Endothelial cell of umbilical vein (primary cell): ENCODE measurements at regions of chr20 and their contacts with region 1.

Region 1: DNA sequence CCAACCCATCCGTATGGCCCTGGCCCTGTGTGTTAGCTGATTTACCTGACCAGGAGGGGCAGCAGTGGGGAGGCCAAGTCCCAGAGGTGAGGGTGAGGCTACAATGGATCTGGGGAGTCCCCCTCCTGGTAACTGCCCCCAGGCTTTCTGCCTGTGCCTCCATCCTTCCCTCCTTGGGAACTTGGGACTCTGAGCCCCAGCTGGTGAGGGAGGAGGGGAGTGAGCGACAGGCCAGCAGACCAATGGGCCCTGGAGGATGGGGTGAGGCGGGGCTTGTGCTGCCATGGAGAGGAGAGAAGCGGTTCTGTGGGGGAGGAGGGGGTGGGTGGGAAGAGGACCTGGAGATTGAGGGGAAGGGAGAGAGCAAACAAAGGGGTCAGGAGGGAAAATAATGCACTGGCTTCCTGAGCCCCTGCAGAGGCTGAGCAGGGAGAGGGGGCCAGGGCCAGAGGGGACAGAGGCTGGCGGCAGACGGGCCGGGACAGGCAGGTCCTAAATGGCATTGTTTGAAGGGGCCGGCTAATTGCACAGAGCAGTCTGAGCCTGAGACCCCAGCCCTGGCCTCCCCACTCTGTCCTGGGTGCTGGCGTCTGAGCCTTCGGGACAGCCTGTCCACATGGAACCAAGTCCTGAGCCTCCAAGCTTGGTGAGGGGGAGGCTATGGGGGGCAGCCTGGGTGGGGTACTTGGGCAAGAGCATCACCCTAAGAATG is 17.5 kb downstream of the DNMT3B start:
- DNase-seq: no peak
- H3K4me3 ChIP-seq: no peak overlapping the region
- H3K27ac ChIP-seq: no peak overlapping the region
- H3K4me1 ChIP-seq: no peaks in the 10 kb centered on the region
- H3K27me3 ChIP-seq: no peaks in the 10 kb centered on the region
- CTCF ChIP-seq: no peak
- POLR2A ChIP-seq: no peak

Region 2: GRCh38 chr20:32652739-32653526 is 126.7 kb before region 1 on chr20:
- CTCF ChIA-PET with region 1: interaction called, 14 read pairs
- POLR2A ChIA-PET with region 1: no interaction called
- dilution Hi-C with region 1: no loop called
- intact Hi-C with region 1: no loop called
- DNase-seq: peak; percentile 70
- H3K4me3 ChIP-seq: no peak overlapping the region
- H3K27ac ChIP-seq: no peak overlapping the region
- H3K4me1 ChIP-seq: no peaks in the 10 kb centered on the region
- H3K27me3 ChIP-seq: no peaks in the 10 kb centered on the region
- CTCF ChIP-seq: peak; percentile 93 to 95
- POLR2A ChIP-seq: no peak

Region 3: DNA sequence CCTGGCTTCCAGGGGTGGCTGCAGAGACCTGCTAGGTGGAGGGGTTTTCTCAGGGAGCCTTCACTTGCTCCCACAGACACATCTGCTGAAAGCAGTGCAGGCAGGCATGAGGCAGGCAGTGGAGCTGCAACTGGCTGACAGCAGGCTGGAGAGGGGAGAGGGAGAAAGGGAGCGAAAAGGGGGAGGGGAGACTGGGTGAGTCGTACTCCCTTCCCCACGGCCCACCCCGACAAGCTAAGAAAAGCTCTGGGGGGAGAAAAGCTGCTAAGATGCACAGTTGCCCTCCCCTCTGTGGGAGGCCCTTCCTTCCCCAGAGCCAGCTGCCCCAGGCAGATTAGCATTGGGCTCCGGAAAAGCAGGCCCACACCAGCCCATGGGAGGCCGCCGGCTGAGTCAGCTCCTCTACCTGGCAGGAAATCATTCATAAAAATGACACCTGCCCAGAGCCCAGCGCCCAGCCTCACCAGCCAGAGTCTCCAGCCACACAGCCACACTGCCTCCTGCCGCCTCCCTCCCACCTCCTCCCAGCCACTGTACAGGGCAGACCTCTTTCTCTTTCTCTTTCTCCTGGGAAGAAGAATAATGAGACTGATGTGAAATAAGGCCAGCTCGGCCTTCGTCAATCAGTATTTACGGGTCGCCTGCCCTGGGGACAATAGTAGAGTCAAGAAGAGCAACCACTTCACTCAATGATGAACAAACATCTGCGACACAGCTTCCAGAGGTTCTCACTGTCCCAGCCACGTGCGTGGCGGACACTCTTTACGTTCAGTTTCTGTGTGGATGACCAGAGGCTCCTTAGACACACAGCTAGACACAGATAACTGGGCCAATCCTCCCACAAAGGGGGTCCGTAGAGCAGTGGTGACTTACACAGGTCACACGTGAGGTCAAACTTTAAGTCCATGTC is 98.2 kb before region 1 on chr20:
- CTCF ChIA-PET with region 1: interaction called, 636 read pairs
- POLR2A ChIA-PET with region 1: no interaction called
- dilution Hi-C with region 1: no loop called
- intact Hi-C with region 1: no loop called
- DNase-seq: peak; percentile 76
- H3K4me3 ChIP-seq: no peak overlapping the region
- H3K27ac ChIP-seq: no peak overlapping the region
- H3K4me1 ChIP-seq: peaks cover 11% of the 10 kb centered on the region
- H3K27me3 ChIP-seq: no peaks in the 10 kb centered on the region
- CTCF ChIP-seq: no peak
- POLR2A ChIP-seq: no peak

Region 4: DNA sequence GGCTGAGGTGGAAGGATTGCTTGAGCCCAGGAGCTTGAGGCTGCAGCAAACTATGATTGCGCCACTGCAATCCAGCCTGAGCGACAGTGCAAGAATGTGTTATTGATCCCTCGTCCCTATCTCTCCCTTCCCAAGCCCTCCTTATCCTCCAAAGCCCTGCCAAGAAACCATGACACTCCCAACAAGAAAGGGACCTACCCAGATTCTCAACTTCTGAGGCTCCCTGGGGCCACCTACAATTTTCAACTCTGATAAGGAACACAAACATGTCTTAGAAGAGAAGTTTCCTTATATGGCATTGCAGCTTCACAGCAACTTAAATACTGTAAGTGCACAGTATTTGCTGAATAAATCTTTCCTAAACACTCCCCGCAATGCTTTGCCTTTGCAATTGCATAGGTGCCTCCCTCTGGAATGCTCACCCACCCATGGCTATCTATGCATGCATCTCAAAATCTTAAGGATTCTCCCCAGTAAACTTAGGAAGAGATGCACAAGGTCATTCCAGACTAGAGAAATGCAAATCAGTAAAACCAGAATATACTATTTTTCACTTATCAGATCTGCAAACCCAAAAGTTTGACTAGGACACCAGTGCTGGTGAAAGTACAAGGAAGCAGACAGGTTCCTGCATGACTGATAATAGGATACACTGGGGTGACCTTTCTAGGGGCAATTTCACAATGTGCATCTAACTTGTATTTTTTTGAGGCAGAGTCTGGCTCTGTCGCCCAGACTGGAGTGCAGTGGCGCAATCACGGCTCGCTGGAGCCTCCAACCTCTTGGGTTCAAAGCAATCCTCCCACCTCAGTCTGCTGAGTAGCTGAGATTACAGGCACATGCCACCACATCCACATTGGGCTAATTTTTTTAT is 48.0 kb before region 1 on chr20:
- CTCF ChIA-PET with region 1: interaction called, 10 read pairs
- POLR2A ChIA-PET with region 1: no interaction called
- dilution Hi-C with region 1: no loop called
- intact Hi-C with region 1: no loop called
- DNase-seq: no peak
- H3K4me3 ChIP-seq: no peak overlapping the region
- H3K27ac ChIP-seq: no peak overlapping the region
- H3K4me1 ChIP-seq: no peaks in the 10 kb centered on the region
- H3K27me3 ChIP-seq: no peaks in the 10 kb centered on the region
- CTCF ChIP-seq: no peak
- POLR2A ChIP-seq: no peak

Region 5: GRCh38 chr20:32762149-32762753 is 17.4 kb before region 1 on chr20 and contains the start of gene DNMT3B:
- CTCF ChIA-PET with region 1: interaction called, 77 read pairs
- POLR2A ChIA-PET with region 1: no interaction called
- dilution Hi-C with region 1: no loop called
- intact Hi-C with region 1: no loop called
- DNase-seq: peak; percentile 79
- H3K4me3 ChIP-seq: peak within 1 kb of the TSS; percentile 73 to 92 (median 88)
- H3K27ac ChIP-seq: no peak within 1 kb of the TSS
- H3K4me1 ChIP-seq: peaks cover 14% of the 10 kb centered on the region
- H3K27me3 ChIP-seq: no peaks in the 10 kb centered on the region
- CTCF ChIP-seq: peak; percentile 14 to 23
- POLR2A ChIP-seq: no peak
- total RNA-seq, gene DNMT3B: 6.8 TPM in 2 replicates

Region 6: DNA sequence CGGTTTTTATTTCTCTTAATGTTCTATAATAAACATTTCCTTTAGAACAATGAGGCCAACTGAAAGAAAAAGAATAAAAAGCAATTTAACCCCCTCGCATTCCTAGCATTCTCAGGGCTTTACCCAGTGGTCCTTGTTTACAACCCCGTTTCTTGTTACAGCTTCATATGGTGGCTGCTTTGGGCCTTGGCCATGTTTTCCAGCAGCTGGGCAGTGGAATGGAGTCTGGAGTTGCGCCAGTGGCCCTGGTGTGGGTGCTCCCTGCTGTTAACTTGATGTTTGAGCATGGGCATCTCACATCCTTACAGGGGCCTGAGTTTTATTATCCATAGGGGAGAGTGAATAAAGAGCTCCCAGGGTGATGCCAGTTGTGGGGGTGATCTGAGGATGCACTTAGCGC is 97.9 kb after region 1 on chr20:
- CTCF ChIA-PET with region 1: no interaction called
- POLR2A ChIA-PET with region 1: no interaction called
- dilution Hi-C with region 1: no loop called
- intact Hi-C with region 1: no loop called
- DNase-seq: peak; percentile 59
- H3K4me3 ChIP-seq: no peak overlapping the region
- H3K27ac ChIP-seq: no peak overlapping the region
- H3K4me1 ChIP-seq: no peaks in the 10 kb centered on the region
- H3K27me3 ChIP-seq: no peaks in the 10 kb centered on the region
- CTCF ChIP-seq: no peak
- POLR2A ChIP-seq: no peak